ENCODE measurements at regions of chrX and their contacts with region 1.

Region 1: GRCh38 chrX:23732704-23733103 is 10.4 kb downstream of the ACOT9 start:
- H3K4me3 ChIP-seq: no peak overlapping the region
- H3K27ac ChIP-seq: no peak overlapping the region
- H3K4me1 ChIP-seq: 0 out of 2 replicates have a peak, but pooled peaks cover 3% of the 10 kb centered on the region
- CTCF ChIP-seq: no peak

Region 2: DNA sequence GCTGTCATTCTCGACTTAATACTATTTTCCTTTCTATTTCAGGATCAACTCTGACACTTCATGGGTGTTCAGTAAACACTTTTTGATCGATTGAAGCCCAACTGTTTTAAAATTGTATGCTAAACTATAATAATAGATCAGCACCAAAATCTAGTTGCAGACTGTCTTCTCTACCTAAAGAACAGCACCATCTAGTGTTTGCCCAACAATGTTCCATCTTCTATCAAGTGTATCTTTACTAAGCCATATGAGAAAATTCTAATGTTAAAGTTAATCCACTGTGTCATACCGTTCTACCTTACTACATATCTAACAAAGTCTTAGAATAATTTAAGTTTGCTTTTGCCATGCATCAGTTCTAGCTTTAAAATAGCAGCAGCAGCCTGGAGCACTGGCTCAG is 178.4 kb before region 1 on chrX:
- CTCF ChIA-PET with region 1: no interaction called
- POLR2A ChIA-PET with region 1: no interaction called
- H3K4me3 ChIP-seq: no peak overlapping the region
- H3K27ac ChIP-seq: no peak overlapping the region
- H3K4me1 ChIP-seq: peaks cover 7% of the 10 kb centered on the region
- CTCF ChIP-seq: no peak

Region 3: DNA sequence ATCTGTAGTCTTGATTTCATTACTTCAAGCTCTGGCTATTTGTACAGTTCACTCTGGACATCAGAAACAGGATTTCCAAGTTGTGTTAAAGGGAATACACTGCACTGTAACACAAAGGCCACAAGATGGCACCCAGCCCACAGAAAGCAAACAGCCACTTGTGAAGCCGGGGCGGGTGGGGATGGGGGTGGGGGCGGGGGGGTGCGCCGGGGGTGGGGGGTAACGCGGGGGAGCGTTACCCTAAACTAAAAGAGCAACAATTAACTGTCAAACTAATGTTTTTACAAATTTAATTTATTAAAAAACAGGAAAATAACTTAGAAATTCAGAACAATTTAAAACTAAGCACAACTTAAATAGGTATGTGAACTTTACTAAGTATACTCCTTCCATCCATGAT is 38.1 kb before region 1 on chrX:
- CTCF ChIA-PET with region 1: no interaction called
- POLR2A ChIA-PET with region 1: no interaction called
- H3K4me3 ChIP-seq: no peak overlapping the region
- H3K27ac ChIP-seq: no peak overlapping the region
- H3K4me1 ChIP-seq: no peaks in the 10 kb centered on the region
- CTCF ChIP-seq: no peak

Region 4: GRCh38 chrX:23861215-23861896 is 128.7 kb after region 1 on chrX:
- CTCF ChIA-PET with region 1: interaction called, 10 read pairs
- POLR2A ChIA-PET with region 1: no interaction called
- H3K4me3 ChIP-seq: no peak overlapping the region
- H3K27ac ChIP-seq: no peak overlapping the region
- H3K4me1 ChIP-seq: no peaks in the 10 kb centered on the region
- CTCF ChIP-seq: no peak

Measured in HEK293 (cell line).